IMR-90 (cell line): ENCODE measurements at regions of chr14 and their contacts with region 1.

Region 1: GRCh38 chr14:37874429-37875191 is 279.2 kb downstream of the TTC6 start:
- DNase-seq: peak; percentile 48
- ATAC-seq: peak; percentile 98
- H3K4me3 ChIP-seq: no peak overlapping the region
- H3K27ac ChIP-seq: no peak overlapping the region
- H3K4me1 ChIP-seq: no peaks in the 10 kb centered on the region
- H3K27me3 ChIP-seq: peaks cover 9% of the 10 kb centered on the region
- CTCF ChIP-seq: peak; percentile 84
- POLR2A ChIP-seq: no peak
- RAD21 ChIP-seq: peak; percentile 86

Region 2: DNA sequence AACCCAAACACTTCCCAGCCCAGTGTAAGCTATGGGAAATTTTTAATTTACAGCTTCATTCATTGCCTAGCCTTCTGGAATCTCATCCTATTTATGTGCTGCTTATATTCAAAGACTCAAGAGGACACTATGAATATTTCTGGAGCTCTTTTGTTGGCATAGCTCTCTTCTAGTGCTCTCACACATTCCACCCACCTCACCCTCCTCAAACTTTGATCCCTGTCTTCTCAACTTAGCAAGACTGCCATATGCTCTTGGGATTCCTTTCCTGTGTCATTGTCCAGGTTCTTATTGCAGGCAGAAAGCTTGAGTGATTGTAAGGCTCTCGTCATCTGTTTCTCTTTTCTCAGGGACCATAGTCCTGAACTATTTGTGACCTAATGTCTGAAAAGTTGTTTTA is 1336.6 kb before region 1 on chr14:
- CTCF ChIA-PET with region 1: no interaction called
- POLR2A ChIA-PET with region 1: no interaction called
- dilution Hi-C with region 1: no loop called
- in situ Hi-C with region 1: no loop called
- intact Hi-C with region 1: no loop called
- DNase-seq: no peak
- ATAC-seq: no peak
- H3K4me3 ChIP-seq: no peak overlapping the region
- H3K27ac ChIP-seq: no peak overlapping the region
- H3K4me1 ChIP-seq: no peaks in the 10 kb centered on the region
- H3K27me3 ChIP-seq: peaks cover 2% of the 10 kb centered on the region; the same call in 1 of the 2 replicates
- CTCF ChIP-seq: no peak
- POLR2A ChIP-seq: no peak
- RAD21 ChIP-seq: no peak

Region 3: DNA sequence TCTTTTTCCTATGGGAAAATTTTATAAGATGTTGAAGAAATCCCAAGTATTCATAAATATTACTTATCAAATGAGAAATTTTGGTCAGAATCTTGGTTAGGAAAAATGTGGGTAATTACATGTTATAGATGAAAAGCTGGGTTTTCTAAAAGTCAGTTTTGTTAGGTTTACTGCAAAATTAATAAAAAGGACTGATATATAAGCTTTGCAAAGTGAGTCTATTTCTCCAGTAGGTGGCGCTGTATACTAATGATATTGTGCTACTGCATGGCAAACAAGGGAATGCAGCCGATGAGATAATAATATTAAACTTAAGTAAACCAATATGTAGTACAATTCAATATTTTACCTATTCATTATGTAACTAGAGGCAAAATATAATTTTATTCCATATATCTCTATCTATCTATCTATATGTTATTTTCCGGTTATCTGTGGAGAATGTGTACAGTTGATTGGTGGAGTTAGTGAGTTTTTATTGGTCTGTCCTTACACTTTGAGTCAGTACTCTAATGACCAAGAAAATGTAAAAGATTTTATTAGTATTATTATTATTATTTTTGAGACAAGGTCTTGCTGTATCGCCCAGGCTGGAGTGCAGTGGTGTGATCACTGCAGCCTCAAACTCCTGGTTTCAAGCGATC is 643.9 kb before region 1 on chr14:
- CTCF ChIA-PET with region 1: interaction called, 4 read pairs
- POLR2A ChIA-PET with region 1: no interaction called
- dilution Hi-C with region 1: no loop called
- in situ Hi-C with region 1: no loop called
- intact Hi-C with region 1: loop called (anchors 1 kb)
- DNase-seq: peak; percentile 77
- ATAC-seq: peak; percentile 85
- H3K4me3 ChIP-seq: no peak overlapping the region
- H3K27ac ChIP-seq: no peak overlapping the region
- H3K4me1 ChIP-seq: no peaks in the 10 kb centered on the region
- H3K27me3 ChIP-seq: no peaks in the 10 kb centered on the region
- CTCF ChIP-seq: peak; percentile 76
- POLR2A ChIP-seq: no peak
- RAD21 ChIP-seq: peak; percentile 55

Region 4: GRCh38 chr14:37241198-37241597 is 633.4 kb before region 1 on chr14:
- CTCF ChIA-PET with region 1: no interaction called
- POLR2A ChIA-PET with region 1: no interaction called
- dilution Hi-C with region 1: no loop called
- in situ Hi-C with region 1: loop called (anchors 5 kb)
- intact Hi-C with region 1: loop called (anchors 1 kb)
- DNase-seq: no peak
- ATAC-seq: no peak
- H3K4me3 ChIP-seq: no peak overlapping the region
- H3K27ac ChIP-seq: no peak overlapping the region
- H3K4me1 ChIP-seq: no peaks in the 10 kb centered on the region
- H3K27me3 ChIP-seq: no peaks in the 10 kb centered on the region
- CTCF ChIP-seq: no peak
- POLR2A ChIP-seq: no peak
- RAD21 ChIP-seq: no peak

Region 5: GRCh38 chr14:37246427-37246914 is 628.1 kb before region 1 on chr14:
- CTCF ChIA-PET with region 1: no interaction called
- POLR2A ChIA-PET with region 1: no interaction called
- dilution Hi-C with region 1: no loop called
- in situ Hi-C with region 1: loop called (anchors 5 kb)
- intact Hi-C with region 1: loop called (anchors 1 kb)
- DNase-seq: peak; percentile 63
- ATAC-seq: peak; percentile 68
- H3K4me3 ChIP-seq: no peak overlapping the region
- H3K27ac ChIP-seq: no peak overlapping the region
- H3K4me1 ChIP-seq: no peaks in the 10 kb centered on the region
- H3K27me3 ChIP-seq: no peaks in the 10 kb centered on the region
- CTCF ChIP-seq: peak; percentile 83
- POLR2A ChIP-seq: 0 out of 2 replicates have a peak, but pooled peaks have one; percentile 16
- RAD21 ChIP-seq: peak; percentile 84

Region 6: DNA sequence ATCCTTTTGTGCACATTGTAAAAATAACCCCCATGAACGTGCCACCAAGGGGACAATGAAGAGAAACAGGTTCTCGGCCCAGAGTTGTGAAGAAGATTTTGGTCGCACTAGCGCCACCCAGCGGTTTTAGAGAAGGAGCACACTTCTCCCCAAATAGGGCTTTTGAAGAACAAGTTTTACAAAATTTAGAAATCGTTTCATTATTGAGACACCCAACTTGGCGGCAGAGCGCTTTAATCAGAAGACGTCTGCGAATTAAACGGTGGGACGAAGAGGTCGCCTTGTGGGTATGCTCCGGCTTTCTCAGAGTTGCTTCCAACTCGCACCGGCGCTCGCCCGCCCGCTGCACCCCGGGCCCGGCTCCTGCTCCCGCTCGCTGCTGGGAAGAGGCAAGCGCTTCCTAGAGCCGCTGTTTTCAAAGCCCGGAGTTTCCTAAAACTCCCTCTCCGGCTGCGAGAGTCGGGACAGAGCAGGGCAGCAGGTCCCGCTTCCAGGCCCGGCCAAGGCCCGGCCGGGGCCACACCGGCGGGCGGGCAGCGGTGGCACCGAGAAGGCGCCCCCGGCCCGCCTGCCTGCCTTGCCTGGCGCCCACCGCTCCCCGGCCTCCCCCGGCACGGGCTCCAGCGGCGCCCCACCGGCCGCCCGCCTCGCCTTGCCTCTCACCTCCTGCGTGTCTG is 280.2 kb before region 1 on chr14:
- CTCF ChIA-PET with region 1: no interaction called
- POLR2A ChIA-PET with region 1: no interaction called
- dilution Hi-C with region 1: no loop called
- in situ Hi-C with region 1: no loop called
- intact Hi-C with region 1: loop called (anchors 1 kb)
- DNase-seq: peak; percentile 80
- ATAC-seq: peak; percentile 74
- H3K4me3 ChIP-seq: peak overlapping the region; percentile 69
- H3K27ac ChIP-seq: no peak overlapping the region
- H3K4me1 ChIP-seq: peaks cover 3% of the 10 kb centered on the region; the same call in 1 of the 2 replicates
- H3K27me3 ChIP-seq: peaks cover 76% of the 10 kb centered on the region
- CTCF ChIP-seq: peak; percentile 81
- POLR2A ChIP-seq: no peak
- RAD21 ChIP-seq: peak; percentile 64